Activated CD4-positive, alpha-beta memory T cell treated with anti-CD3 and anti-CD28 coated beads for 36 hours (primary cell): ENCODE measurements at regions of chr17 and their contacts with region 1.

Region 1: DNA sequence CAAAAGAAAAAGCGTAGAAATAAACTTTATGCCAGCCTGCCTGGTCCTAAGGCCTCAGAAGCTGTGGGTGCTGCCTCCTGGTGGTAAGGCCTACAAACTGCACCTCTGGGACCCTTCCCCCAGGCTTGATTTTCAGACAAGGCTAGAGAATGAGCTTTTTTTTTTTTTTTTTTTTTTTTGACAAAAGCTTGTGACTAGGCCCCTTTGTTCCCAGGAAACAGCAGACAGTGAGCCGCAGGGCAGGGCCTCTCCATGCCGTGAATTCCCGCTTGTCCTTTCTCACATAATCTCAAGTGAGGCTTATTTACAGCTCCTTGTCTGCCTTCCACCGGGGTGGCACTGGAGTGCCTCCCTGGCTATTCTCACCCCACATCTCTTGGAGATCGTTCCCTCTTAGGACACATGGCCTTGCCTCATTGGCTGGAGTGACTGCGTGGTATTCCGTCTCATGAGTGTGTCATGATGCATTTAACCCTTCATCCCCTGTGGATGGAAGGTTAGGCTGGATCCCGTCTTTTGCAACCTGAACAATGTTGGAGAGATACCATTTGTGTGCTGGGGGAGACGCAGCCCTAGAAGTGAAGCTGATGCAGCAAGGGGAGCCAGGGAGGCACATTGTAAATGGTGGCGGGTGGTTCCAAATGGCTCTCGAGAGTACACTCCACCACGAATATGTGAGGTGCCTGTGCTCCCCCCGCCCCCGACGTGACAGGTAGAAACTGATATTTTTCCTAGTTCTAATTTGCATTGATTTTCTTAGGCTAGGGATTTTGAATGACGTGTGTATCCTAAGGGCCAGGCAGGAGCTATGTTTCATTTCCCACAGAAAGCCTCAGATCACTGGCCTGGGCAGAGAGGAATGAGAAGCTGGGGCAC is 49.6 kb downstream of the USP22 start:
- DNase-seq: peak; percentile 78
- H3K4me3 Mint-ChIP-seq: no peak overlapping the region
- H3K27ac Mint-ChIP-seq: no peak overlapping the region
- H3K4me1 Mint-ChIP-seq: no peaks in the 10 kb centered on the region
- H3K27me3 Mint-ChIP-seq: no peaks in the 10 kb centered on the region

Region 2: GRCh38 chr17:20797292-20797691 is 195.9 kb before region 1 on chr17:
- CTCF ChIA-PET with region 1: interaction called, 6 read pairs
- POLR2A ChIA-PET with region 1: no interaction called
- intact Hi-C with region 1: loop called (anchors 1 kb)
- DNase-seq: no peak
- H3K4me3 Mint-ChIP-seq: no peak overlapping the region
- H3K27ac Mint-ChIP-seq: peak overlapping the region; percentile 53
- H3K4me1 Mint-ChIP-seq: peaks cover 11% of the 10 kb centered on the region
- H3K27me3 Mint-ChIP-seq: no peaks in the 10 kb centered on the region

Region 3: DNA sequence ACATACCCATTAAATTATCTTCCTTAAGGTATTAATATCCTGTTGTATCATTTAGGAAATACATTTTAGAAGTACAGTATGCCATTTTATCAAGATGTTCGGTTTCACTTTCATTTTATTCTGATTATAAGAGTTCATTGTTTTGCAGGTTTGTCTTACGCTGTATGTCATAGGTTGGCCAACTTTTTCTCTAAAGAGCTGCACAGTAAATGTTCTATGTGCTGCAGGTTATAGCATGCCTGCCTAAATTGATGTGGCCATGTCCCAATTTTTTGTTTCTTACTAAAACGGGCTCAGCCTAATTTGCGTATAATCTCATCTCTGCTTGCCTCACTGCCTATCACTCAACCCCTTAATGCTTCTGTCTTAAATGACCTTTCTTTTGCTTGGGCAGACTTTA is 76.8 kb before region 1 on chr17:
- CTCF ChIA-PET with region 1: no interaction called
- POLR2A ChIA-PET with region 1: no interaction called
- intact Hi-C with region 1: loop called (anchors 10 kb)
- DNase-seq: no peak
- H3K4me3 Mint-ChIP-seq: no peak overlapping the region
- H3K27ac Mint-ChIP-seq: no peak overlapping the region
- H3K4me1 Mint-ChIP-seq: peaks cover 6% of the 10 kb centered on the region
- H3K27me3 Mint-ChIP-seq: peaks cover 4% of the 10 kb centered on the region

Region 4: DNA sequence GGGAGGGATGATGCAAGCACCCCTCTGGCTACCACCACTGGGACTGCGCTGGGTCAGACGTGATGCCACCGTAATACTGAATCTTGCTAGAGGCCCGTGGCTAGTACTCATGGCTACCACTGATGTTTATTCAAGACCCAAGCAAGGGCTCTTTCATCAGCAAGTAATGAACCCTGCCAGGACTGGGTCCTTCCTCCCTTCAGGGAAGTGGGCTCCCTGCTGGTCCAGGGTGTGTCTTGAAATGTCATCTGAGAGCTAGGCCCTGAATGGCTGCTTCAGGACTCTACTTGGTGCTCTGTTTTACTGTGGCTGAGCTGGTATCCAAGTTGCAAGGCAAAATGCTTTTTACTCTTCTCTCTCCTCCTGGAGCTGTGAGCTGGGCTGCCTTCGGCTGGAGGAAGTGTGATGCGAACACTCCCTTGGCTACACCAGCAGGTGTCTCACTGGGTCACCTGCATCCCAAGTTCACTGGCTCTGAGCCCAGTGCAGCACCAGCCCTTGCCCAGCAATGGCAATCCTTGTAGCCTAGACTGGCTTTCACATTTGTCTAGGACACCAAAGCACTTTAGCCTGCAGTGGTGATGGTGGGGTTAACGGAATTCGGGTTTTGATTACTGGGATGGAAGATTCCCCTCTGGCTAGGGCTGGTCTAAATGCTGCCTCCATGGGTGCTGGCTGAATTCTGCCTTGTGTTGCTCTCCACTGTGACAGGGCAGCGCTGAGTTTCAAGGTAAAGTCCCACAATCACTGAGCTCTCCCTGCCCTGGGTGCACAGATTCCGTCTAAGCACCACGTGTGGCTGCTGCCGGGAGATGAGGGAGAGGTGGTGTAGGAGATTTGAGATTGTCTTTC is 49.0 kb before region 1 on chr17:
- CTCF ChIA-PET with region 1: interaction called, 3 read pairs
- POLR2A ChIA-PET with region 1: no interaction called
- intact Hi-C with region 1: loop called (anchors 1 kb)
- DNase-seq: peak; percentile 52
- H3K4me3 Mint-ChIP-seq: no peak overlapping the region
- H3K27ac Mint-ChIP-seq: no peak overlapping the region
- H3K4me1 Mint-ChIP-seq: peaks cover 4% of the 10 kb centered on the region
- H3K27me3 Mint-ChIP-seq: peaks cover 5% of the 10 kb centered on the region